Cardiac septum (tissue), 1 donor: ENCODE measurements at regions of chrX and their contacts with region 1.

Region 1: DNA sequence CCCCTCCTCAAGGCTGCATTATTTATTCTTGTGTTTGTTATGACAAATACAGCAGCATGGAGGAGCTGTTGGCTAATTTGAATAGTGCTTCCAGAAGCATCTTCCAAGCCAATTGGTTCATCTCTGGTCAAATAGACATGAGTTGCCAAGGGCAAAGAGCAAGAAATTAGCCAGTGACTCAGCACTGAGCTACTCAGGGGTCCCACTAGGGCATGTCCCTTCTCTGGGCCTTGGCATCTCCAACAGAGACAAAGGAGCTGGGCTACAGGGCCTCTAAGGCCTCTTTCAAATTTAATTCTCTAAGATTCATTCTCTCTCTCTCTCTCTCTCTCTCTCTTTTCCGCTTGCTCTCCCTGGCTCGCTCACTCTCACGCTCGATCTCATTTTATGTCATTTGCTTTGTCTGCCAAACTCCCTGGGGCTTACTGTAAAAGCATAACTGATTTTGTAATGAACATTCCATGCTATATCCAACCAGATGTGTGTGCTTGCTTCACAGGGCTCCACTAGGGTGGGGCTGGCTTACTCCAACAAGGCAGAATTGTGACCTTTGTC is 86.7 kb upstream of the MAGEA4 start:
- DNase-seq: no peak

Region 2: GRCh38 chrX:151776181-151776731 is 49.7 kb before region 1 on chrX:
- intact Hi-C with region 1: no loop called
- DNase-seq: no peak

Region 3: GRCh38 chrX:152632445-152633097 is 806.6 kb after region 1 on chrX:
- intact Hi-C with region 1: loop called (anchors 5 kb)
- DNase-seq: no peak